ENCODE measurements at regions of chr4 and their contacts with region 1.

Region 1: DNA sequence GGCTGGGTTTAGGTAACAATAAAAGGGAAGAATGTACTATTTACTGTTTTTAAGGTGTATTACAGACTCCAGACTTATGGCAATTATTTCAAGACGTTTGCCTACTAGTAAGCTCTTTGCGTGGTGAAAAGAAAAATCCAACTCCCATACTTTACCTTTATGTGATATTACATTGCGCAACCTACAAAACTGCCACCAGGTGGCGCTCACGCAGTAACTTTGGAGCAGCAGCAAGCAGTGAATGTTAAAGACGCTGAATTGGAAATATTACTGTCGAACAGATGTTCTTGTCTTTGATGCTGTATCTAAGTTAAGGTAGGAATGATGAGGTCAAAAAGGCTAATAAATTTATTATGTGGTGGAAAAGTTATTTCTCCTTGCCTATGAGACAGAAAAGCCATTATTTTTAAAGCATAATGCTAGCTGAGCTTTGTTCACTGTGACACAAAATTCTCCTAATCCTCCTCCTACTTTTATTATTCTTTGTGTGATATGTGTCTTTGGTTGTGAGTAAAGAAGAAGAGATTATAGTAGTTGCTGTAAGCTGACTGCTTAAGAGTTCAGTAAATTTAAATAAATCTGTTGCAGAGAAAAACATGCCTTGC is 1099.8 kb upstream of the TENM3 start:
- DNase-seq: peak; percentile 59 to 72 (median 71)
- ATAC-seq: peak; percentile 72 to 86 (median 76)
- H3K4me3 ChIP-seq: no peak overlapping the region
- H3K27ac ChIP-seq: no peak overlapping the region
- H3K4me1 ChIP-seq: no peaks in the 10 kb centered on the region
- H3K27me3 ChIP-seq: no peaks in the 10 kb centered on the region
- CTCF ChIP-seq: peak; percentile 81 to 94 (median 91)
- POLR2A ChIP-seq: no peak

Region 2: GRCh38 chr4:181528570-181529184 is 385.3 kb after region 1 on chr4:
- intact Hi-C with region 1: loop called in 1 of 2 experiments (anchors 10 kb)
- DNase-seq: peak; percentile 69 to 77 (median 75)
- ATAC-seq: peak; percentile 90 to 97 (median 96)
- H3K4me3 ChIP-seq: no peak overlapping the region
- H3K27ac ChIP-seq: no peak overlapping the region
- H3K4me1 ChIP-seq: no peaks in the 10 kb centered on the region
- H3K27me3 ChIP-seq: peaks cover 0 to 6% of the 10 kb centered on the region in 2 donors
- CTCF ChIP-seq: peak; percentile 63 to 86 (median 76)
- POLR2A ChIP-seq: no peak

Measured in right lobe of liver (tissue), 6 donors.